HCT116 (cell line): ENCODE measurements at regions of chr1 and their contacts with region 1.

Region 1: GRCh38 chr1:17569200-17570161 is 30.0 kb downstream of the ARHGEF10L start:
- DNase-seq: peak; percentile 58
- ATAC-seq: peak; percentile 76
- H3K4me3 ChIP-seq: peak overlapping the region in 1 of 2 experiments; percentile 48
- H3K27ac ChIP-seq: peak overlapping the region; percentile 95
- H3K4me1 ChIP-seq: peaks cover 47 to 67% of the 10 kb centered on the region in 2 experiments
- H3K27me3 ChIP-seq: no peaks in the 10 kb centered on the region
- CTCF ChIP-seq: no peak
- POLR2A ChIP-seq: no peak
- RAD21 ChIP-seq: no peak

Region 2: DNA sequence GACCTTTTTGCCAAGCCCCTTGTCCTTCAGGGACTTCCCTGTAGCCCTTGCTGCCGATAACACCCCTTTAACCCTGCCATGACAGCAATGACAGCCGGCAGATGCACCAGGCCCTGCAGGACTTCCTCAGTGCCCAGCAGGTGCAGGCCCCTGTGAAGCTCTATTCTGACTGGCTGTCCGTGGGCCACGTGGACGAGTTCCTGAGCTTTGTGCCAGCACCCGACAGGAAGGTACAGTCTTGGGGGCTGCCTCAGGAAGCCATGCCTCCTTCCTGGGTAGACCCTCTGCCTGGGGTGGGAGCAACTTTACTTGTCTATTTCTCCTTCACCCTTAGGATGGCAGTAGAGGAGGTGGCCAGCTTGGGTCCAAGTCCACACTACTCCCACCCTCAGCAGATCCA is 213.6 kb before region 1 on chr1:
- CTCF ChIA-PET with region 1: no interaction called
- POLR2A ChIA-PET with region 1: no interaction called
- RAD21 ChIA-PET with region 1: no interaction called
- intact Hi-C with region 1: no loop called
- DNase-seq: no peak
- ATAC-seq: no peak
- H3K4me3 ChIP-seq: no peak overlapping the region
- H3K27ac ChIP-seq: no peak overlapping the region
- H3K4me1 ChIP-seq: no peaks in the 10 kb centered on the region
- H3K27me3 ChIP-seq: no peaks in the 10 kb centered on the region
- CTCF ChIP-seq: no peak
- POLR2A ChIP-seq: no peak
- RAD21 ChIP-seq: no peak

Region 3: GRCh38 chr1:17520071-17520813 is 49.2 kb before region 1 on chr1:
- CTCF ChIA-PET with region 1: interaction called, 3 read pairs
- POLR2A ChIA-PET with region 1: interaction called, 6 read pairs
- RAD21 ChIA-PET with region 1: no interaction called
- intact Hi-C with region 1: loop called (anchors 1 kb)
- DNase-seq: peak; percentile 80
- ATAC-seq: peak; percentile 88
- H3K4me3 ChIP-seq: peak overlapping the region; percentile 29 to 45
- H3K27ac ChIP-seq: peak overlapping the region; percentile 60
- H3K4me1 ChIP-seq: peaks cover 40 to 78% of the 10 kb centered on the region in 2 experiments
- H3K27me3 ChIP-seq: no peaks in the 10 kb centered on the region
- CTCF ChIP-seq: no peak
- POLR2A ChIP-seq: no peak
- RAD21 ChIP-seq: peak; percentile 24; the same call in 1 of the 2 replicates

Region 4: DNA sequence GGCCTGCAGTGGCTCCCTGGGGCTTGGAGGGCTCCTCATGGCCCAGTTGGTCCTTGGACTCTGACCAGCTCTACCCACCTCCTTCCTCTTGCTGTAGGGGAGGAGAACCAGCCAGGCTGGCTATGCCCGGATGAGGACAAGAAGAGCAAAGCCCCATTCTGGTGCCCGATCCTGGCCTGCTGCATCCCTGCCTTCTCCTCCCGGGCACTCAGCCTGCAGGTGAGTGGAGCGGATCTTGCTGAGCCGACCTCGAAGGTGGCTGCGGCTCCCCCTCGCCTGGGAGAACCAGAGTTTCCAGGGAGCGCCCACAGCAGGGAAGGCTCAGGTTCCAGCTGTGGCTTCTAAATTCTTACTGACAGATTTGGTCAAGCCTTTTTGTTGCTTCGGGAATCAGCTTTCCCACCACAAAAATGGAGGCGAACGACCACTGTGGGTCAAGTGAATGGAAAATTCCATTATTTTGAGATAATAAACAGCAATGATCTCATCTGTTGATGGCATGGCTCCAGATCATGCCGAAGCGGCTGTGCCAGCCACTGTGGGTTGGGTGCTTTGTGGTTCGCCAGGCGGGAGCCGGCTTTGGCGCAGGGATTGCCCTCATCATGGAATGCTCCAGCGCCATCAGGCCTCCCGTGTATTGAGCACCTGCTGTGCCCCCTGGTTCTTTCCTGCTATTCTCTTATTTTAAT is 79.1 kb after region 1 on chr1:
- CTCF ChIA-PET with region 1: no interaction called
- POLR2A ChIA-PET with region 1: no interaction called
- RAD21 ChIA-PET with region 1: no interaction called
- intact Hi-C with region 1: no loop called
- DNase-seq: no peak
- ATAC-seq: no peak
- H3K4me3 ChIP-seq: no peak overlapping the region
- H3K27ac ChIP-seq: no peak overlapping the region
- H3K4me1 ChIP-seq: no peaks in the 10 kb centered on the region
- H3K27me3 ChIP-seq: no peaks in the 10 kb centered on the region
- CTCF ChIP-seq: no peak
- POLR2A ChIP-seq: no peak
- RAD21 ChIP-seq: no peak

Region 5: GRCh38 chr1:17719874-17720273 is 150.4 kb after region 1 on chr1:
- CTCF ChIA-PET with region 1: no interaction called
- POLR2A ChIA-PET with region 1: no interaction called
- RAD21 ChIA-PET with region 1: no interaction called
- intact Hi-C with region 1: no loop called
- DNase-seq: no peak
- ATAC-seq: no peak
- H3K4me3 ChIP-seq: no peak overlapping the region
- H3K27ac ChIP-seq: no peak overlapping the region
- H3K4me1 ChIP-seq: peaks cover under 1 to 12% of the 10 kb centered on the region in 2 experiments; a peak in 3 of 4 replicates
- H3K27me3 ChIP-seq: no peaks in the 10 kb centered on the region
- CTCF ChIP-seq: no peak
- POLR2A ChIP-seq: no peak
- RAD21 ChIP-seq: no peak